ENCODE measurements at regions of chr22 and their contacts with region 1.

Region 1: GRCh38 chr22:46542011-46542985 is 4.9 kb upstream of the CELSR1 start:
- DNase-seq: peak; percentile 76
- ATAC-seq: peak; percentile 99
- H3K4me3 Mint-ChIP-seq: no peak overlapping the region
- H3K27ac Mint-ChIP-seq: no peak overlapping the region
- H3K4me1 Mint-ChIP-seq: peaks cover 4% of the 10 kb centered on the region
- H3K27me3 Mint-ChIP-seq: peaks cover 37% of the 10 kb centered on the region

Region 2: GRCh38 chr22:46355371-46355995 is 186.8 kb before region 1 on chr22:
- CTCF ChIA-PET with region 1: interaction called, 11 read pairs
- DNase-seq: peak; percentile 74
- ATAC-seq: peak; percentile 66
- H3K4me3 Mint-ChIP-seq: no peak overlapping the region
- H3K27ac Mint-ChIP-seq: no peak overlapping the region
- H3K4me1 Mint-ChIP-seq: no peaks in the 10 kb centered on the region
- H3K27me3 Mint-ChIP-seq: no peaks in the 10 kb centered on the region